ENCODE measurements at regions of chr10 and their contacts with region 1.

Region 1: GRCh38 chr10:118720685-118721538 is 33.9 kb downstream of the CACUL1 start:
- DNase-seq: peak; percentile 68
- ATAC-seq: peak; percentile 62

Region 2: GRCh38 chr10:118698421-118698820 is 22.5 kb before region 1 on chr10:
- intact Hi-C with region 1: loop called (anchors 1 kb)
- DNase-seq: no peak
- ATAC-seq: no peak

Measured in sciatic nerve (tissue), 2 donors.